Dendritic cell treated with granulocyte-macrophage colony-stimulating factor and Interleukin-4, amounts not matched to agents 40 ng/mL and 50 ng/mL, for 4 days (primary cell): ENCODE measurements at regions of chr15 and their contacts with region 1.

Region 1: DNA sequence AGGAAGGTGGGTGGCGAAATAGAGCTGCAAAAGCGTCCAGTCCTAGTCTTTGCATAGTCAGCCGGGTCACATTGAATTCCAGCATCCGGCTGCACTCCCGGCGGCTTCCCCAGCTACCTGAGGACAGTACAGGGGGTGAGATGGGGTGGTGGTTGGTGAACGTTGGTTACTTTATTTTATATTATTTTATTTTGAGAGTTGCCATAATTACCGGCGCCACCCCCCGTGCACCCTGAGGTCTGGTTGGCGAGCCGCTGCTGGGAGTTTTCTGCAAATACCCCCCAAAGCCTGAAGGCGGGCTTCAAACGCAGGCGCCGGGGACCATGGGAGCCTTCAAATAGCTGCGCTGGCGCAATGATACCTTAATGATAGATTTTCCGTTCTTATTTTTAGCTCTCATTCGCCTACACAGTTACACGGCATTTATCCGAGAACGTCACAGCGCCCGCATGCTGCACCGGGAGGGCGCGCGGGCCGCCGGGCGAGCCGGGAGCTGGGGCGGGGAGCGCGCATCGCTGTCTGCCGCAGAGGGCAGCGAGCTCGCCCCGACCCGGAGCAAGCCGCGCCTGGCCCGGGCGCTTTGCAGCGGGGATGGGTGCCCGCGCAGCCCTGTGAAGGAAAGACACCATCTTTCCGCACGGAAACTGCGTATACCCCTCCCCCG is 756 bp upstream of the RASGRF1 start:
- H3K4me3 Mint-ChIP-seq: no peak overlapping the region
- H3K27ac Mint-ChIP-seq: no peak overlapping the region
- H3K4me1 Mint-ChIP-seq: peaks cover 22% of the 10 kb centered on the region
- H3K27me3 Mint-ChIP-seq: peaks cover 89% of the 10 kb centered on the region

Region 2: DNA sequence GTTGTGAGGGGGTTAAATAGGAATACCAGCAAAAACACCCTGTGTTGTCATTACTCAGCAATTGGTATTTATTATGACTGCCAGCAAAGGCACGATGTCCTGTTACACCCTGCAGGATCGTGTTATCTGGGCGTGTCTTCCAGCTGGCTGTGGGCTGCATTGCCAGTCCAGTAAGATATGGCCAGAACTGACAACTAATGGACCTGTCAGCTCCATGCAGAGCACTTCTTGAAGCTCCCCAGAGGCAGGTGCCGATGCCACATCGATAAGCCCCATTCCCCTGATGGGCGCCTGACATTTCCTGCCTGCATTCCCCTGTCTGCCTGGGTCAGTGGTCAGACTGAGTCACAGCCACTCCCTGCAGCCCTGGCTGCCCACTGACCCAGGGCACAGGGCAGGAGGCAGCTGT is 78.9 kb after region 1 on chr15:
- intact Hi-C with region 1: loop called (anchors 10 kb)
- H3K4me3 Mint-ChIP-seq: no peak overlapping the region
- H3K27ac Mint-ChIP-seq: no peak overlapping the region
- H3K4me1 Mint-ChIP-seq: no peaks in the 10 kb centered on the region
- H3K27me3 Mint-ChIP-seq: peaks cover 30% of the 10 kb centered on the region